ENCODE measurements at regions of chr13 and their contacts with region 1.

Region 1: GRCh38 chr13:99572921-99573320 is 71.6 kb downstream of the TM9SF2 start:
- DNase-seq: no peak
- ATAC-seq: no peak
- H3K4me3 ChIP-seq: no peak overlapping the region
- H3K4me3 Mint-ChIP-seq: no peak overlapping the region
- H3K27ac ChIP-seq: no peak overlapping the region
- H3K27ac Mint-ChIP-seq: no peak overlapping the region
- H3K4me1 ChIP-seq: no peaks in the 10 kb centered on the region
- H3K4me1 Mint-ChIP-seq: peaks cover 0 to 6% (median 2%) of the 10 kb centered on the region in 3 donors
- H3K27me3 ChIP-seq: peaks cover 0 to 5% of the 10 kb centered on the region in 2 experiments
- H3K27me3 Mint-ChIP-seq: no peaks in the 10 kb centered on the region

Region 2: DNA sequence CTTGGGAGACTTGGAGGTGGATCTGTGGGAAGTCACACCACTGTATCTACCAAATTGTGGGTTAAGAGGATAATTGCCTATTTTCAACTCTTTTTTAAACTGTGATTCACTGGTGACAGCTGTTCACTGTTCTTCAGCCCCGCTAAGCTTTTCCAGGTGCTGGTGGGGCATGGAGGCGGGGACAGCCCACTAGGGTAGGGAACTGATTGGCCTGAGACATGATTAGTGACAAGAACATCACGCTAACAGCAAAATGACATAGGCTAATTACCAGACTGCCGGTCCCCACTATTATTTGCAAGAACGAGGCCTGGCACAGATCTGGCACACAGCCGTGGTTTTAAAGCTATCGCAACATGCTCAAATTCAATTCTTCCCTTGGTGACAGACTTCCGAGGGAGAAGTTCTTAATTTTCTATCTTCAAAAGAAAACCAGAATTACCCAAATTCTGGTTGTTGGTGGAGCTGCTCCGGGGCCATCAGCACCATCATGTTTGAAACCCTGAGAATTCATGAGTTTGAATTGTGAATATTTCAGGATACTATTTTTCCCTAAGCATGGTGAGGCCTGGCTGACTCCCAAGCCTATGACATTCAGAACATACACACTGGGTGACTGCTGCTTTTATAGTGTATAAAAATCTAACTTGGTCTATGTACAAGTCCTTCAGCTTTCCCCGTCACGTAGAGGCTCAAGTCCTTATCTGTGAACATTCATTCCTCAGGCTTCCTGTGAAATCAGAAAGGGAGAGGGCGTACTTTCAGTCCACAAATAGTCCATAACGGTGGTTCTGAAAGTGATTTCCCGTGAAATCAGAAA is 612.9 kb before region 1 on chr13:
- CTCF ChIA-PET with region 1: no interaction called
- POLR2A ChIA-PET with region 1: no interaction called
- DNase-seq: no peak
- ATAC-seq: no peak
- H3K4me3 ChIP-seq: no peak overlapping the region
- H3K4me3 Mint-ChIP-seq: no peak overlapping the region
- H3K27ac ChIP-seq: no peak overlapping the region
- H3K27ac Mint-ChIP-seq: no peak overlapping the region
- H3K4me1 ChIP-seq: no peaks in the 10 kb centered on the region
- H3K4me1 Mint-ChIP-seq: peaks cover 14 to 31% (median 23%) of the 10 kb centered on the region in 3 donors
- H3K27me3 ChIP-seq: no peaks in the 10 kb centered on the region
- H3K27me3 Mint-ChIP-seq: no peaks in the 10 kb centered on the region

Region 3: DNA sequence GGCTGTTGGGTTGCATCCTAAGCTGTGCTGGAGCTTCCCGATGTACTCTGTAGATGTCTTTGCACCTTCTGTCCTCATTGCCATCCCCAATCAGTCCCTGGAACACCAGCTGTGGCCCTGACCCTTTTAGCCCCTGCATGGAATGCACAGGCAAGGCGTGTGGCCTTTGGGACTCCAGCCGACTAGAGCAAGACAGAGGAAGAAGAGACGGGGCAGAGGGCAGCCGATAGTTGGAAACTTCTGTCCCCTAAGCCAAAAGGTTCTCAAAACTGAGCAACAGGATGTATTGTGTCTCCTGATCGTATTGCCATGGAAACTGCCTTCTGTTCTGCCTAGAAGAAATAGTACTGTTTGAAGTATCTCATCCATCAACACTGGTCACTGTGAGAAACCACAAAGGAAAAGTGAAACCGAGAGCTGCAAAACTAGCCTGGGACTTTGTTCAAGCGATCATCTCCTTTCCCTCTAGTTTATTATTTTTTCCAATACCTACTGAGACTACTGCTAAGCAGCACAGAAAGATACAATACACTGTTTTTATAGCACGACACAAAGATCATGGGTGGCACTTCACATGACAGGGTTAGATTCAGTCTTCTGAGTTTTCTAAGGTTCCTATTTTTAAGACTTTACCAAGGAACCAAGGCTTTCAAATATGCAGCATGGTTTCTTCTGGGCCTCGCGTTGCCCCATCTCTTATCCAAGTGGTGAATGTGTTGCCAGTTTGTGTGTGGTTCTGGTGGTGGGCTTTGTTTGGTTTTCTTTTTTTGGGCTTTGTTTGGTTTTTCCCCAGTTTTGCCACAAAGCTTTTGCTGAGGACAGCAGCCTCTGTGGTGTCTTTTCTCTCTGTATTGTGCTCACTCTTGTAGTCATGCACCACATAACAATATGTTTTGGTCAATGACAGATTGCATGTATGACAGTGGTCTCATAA is 216.5 kb before region 1 on chr13:
- CTCF ChIA-PET with region 1: no interaction called
- POLR2A ChIA-PET with region 1: no interaction called
- DNase-seq: peak in 32 of 35 experiments; percentile 32 to 93 (median 60)
- ATAC-seq: peak; percentile 51 to 73 (median 55)
- H3K4me3 ChIP-seq: peak overlapping the region in 1 of 2 donors; percentile 28
- H3K4me3 Mint-ChIP-seq: peak overlapping the region; percentile 64 to 73 (median 65)
- H3K27ac ChIP-seq: peak overlapping the region; percentile 100
- H3K27ac Mint-ChIP-seq: peak overlapping the region; percentile 99
- H3K4me1 ChIP-seq: peaks cover 92 to 95% of the 10 kb centered on the region in 2 experiments
- H3K4me1 Mint-ChIP-seq: peaks cover 98 to 100% (median 99%) of the 10 kb centered on the region in 3 donors
- H3K27me3 ChIP-seq: no peaks in the 10 kb centered on the region
- H3K27me3 Mint-ChIP-seq: no peaks in the 10 kb centered on the region

Region 4: GRCh38 chr13:99448546-99448945 is 124.4 kb before region 1 on chr13:
- CTCF ChIA-PET with region 1: no interaction called
- POLR2A ChIA-PET with region 1: interaction called in 1 of 2 experiments, 11 read pairs
- DNase-seq: no peak
- ATAC-seq: no peak
- H3K4me3 ChIP-seq: no peak overlapping the region
- H3K4me3 Mint-ChIP-seq: no peak overlapping the region
- H3K27ac ChIP-seq: no peak overlapping the region
- H3K27ac Mint-ChIP-seq: no peak overlapping the region
- H3K4me1 ChIP-seq: no peaks in the 10 kb centered on the region
- H3K4me1 Mint-ChIP-seq: no peaks in the 10 kb centered on the region
- H3K27me3 ChIP-seq: peaks cover 0 to 2% of the 10 kb centered on the region in 2 experiments
- H3K27me3 Mint-ChIP-seq: peaks cover 3 to 9% of the 10 kb centered on the region in 2 donors

Region 5: GRCh38 chr13:99498171-99499161 is 74.5 kb before region 1 on chr13:
- CTCF ChIA-PET with region 1: no interaction called
- POLR2A ChIA-PET with region 1: no interaction called
- DNase-seq: peak; percentile 87 to 97 (median 94)
- ATAC-seq: peak; percentile 70 to 76 (median 73)
- H3K4me3 ChIP-seq: peak overlapping the region; percentile 59 to 62
- H3K4me3 Mint-ChIP-seq: peak overlapping the region; percentile 82 to 98 (median 91)
- H3K27ac ChIP-seq: peak overlapping the region; percentile 93
- H3K27ac Mint-ChIP-seq: peak overlapping the region; percentile 98 to 99
- H3K4me1 ChIP-seq: peaks cover 44 to 64% of the 10 kb centered on the region in 2 experiments
- H3K4me1 Mint-ChIP-seq: peaks cover 74 to 89% (median 84%) of the 10 kb centered on the region in 3 donors
- H3K27me3 ChIP-seq: no peaks in the 10 kb centered on the region
- H3K27me3 Mint-ChIP-seq: no peaks in the 10 kb centered on the region

Region 6: DNA sequence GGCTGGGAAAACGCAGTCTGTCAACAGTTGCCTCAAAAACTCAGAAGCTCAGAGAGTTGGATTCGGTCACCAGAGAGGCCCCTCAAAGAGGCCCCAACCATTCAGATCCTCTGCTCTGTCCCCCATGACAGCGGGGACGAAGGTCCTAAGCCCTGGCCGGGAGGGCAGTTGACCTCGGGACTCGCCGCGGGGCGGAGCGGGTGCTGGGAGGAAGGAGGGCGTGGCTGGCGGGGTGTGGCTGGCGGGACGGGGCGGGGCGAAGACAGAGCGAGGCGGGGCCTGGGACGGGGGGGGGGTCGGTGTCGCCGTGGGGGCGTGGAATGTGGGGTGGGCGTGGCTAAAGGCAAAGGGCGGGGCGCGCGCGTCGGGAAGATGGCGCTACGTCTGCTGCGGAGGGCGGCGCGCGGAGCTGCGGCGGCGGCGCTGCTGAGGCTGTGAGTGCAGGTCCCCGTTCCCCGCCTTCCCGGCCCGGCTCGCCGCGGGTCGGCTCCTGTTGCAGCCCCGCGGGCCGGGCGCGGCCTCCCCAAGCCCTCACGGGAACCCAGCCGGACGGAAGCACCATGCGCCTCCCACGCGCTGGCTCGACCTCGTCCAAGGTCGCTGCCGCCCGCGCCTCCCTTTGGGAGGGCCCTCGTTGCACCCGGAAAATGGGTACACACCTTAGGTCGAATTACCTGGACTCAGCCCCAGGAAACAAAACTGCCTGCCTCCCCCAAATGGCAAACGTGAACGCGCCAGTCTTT is 33.6 kb after region 1 on chr13:
- CTCF ChIA-PET with region 1: no interaction called
- POLR2A ChIA-PET with region 1: no interaction called
- DNase-seq: peak; percentile 70 to 96 (median 85)
- ATAC-seq: peak; percentile 87 to 92 (median 88)
- H3K4me3 ChIP-seq: peak within 1 kb of the TSS; percentile 78
- H3K4me3 Mint-ChIP-seq: peak within 1 kb of the TSS; percentile 85 to 88 (median 87)
- H3K27ac ChIP-seq: peak within 1 kb of the TSS; percentile 75
- H3K27ac Mint-ChIP-seq: peak within 1 kb of the TSS; percentile 89 to 92
- H3K4me1 ChIP-seq: peaks cover 19 to 25% of the 10 kb centered on the region in 2 experiments
- H3K4me1 Mint-ChIP-seq: peaks cover 52 to 60% (median 59%) of the 10 kb centered on the region in 3 donors
- H3K27me3 ChIP-seq: peaks cover 0 to 2% of the 10 kb centered on the region in 2 experiments
- H3K27me3 Mint-ChIP-seq: no peaks in the 10 kb centered on the region